ENCODE measurements at regions of chr14 and their contacts with region 1.

Region 1: GRCh38 chr14:76386915-76387782 is 11.2 kb downstream of the ESRRB start:
- DNase-seq: peak; percentile 62 to 96 (median 80)

Region 2: DNA sequence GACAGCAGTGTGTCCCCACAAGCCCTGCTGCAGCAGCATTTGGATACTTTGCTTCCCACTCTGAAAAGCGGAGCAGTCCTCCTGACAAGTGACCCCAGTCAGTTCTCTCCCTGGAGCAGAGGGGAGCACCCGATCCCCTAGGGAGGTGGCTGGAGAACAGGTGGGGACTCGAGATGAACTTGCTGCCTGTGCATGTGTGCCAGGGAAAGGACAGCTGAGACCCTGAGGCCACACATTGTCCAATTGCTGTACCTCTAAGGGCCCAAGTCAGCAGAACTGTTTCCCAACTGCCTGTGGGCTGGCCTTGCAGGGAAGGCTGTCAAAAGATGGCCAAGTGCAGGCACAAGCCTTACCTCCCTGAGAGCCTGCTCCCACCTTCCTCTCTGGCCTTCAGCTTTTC is 346.4 kb before region 1 on chr14:
- intact Hi-C with region 1: loop called (anchors 5 kb)
- DNase-seq: no peak

Region 3: GRCh38 chr14:76100236-76100635 is 286.9 kb before region 1 on chr14:
- intact Hi-C with region 1: no loop called
- DNase-seq: no peak